Activated naive CD4-positive, alpha-beta T cell treated with anti-CD3 and anti-CD28 coated beads for 36 hours (primary cell): ENCODE measurements at regions of chr6 and their contacts with region 1.

Region 1: DNA sequence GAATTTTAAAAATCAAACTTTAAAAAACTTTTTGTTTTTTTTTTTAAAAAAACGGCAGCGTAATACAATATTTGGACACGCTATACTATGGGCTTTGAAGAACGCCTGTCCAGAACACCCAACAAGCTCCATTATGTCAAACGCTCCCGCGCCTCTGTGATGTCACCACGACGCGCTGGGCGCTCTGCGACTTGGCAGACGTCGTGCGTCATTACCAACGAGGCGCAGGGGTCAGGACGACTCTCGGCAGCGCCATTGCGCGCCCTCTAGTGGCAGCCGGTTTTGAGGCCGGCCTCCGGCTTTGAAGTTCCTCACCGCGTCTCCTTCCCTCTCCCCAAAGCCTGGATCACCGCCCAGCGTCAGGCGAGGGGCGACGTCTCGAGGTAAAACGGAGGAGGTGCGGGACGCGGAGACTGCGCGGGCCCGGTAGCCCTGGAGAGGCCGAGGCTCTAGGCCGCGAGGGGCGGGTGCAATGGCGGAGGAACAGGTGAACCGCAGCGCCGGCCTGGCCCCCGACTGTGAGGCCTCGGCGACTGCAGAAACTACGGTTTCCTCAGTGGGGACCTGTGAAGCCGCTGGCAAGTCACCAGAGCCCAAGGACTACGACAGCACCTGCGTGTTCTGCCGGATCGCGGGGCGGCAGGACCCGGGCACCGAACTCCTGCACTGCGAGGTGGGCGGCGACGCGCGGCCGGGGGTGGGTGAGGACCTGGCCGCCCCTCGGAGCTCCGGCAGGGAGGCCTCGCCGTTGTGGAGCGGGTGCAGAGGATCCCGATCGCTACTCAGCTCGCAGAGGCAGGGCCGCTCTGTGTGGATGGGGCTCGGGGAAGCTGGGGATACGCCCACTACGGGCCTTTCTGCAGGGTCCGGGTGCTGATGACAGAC is at the start of gene HINT3:
- DNase-seq: peak; percentile 99
- H3K4me3 Mint-ChIP-seq: no peak within 1 kb of the TSS
- H3K27ac Mint-ChIP-seq: peak within 1 kb of the TSS; percentile 72
- H3K4me1 Mint-ChIP-seq: peaks cover 9% of the 10 kb centered on the region
- H3K27me3 Mint-ChIP-seq: peaks cover 2% of the 10 kb centered on the region
- total RNA-seq, gene HINT3: 10.6 to 10.9 TPM

Region 2: DNA sequence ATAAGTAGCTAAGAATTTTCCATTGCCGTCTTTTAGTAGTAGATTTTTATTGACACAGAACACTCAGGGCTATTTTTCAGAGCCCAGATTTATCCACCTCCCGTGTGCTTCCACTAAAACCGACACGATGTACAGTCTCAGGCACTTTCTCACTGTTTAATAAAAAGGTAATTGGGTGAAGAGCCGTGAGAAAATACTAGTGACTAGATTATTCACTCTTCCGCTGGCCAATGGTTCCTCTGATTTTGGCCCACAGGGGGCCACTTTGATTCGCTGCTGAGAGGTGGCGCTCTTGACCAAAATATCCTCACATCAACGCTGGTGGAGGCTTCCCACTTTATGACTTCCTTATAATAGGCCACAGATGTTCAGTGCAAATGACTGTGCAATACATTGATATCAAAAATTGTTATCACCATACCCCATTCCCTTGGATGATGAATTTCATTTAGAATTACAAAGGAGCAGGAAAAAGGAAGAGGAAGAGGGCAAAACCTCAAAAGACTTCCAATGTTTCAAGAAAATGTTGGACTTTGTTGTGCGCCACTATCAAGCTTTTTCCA is 642.6 kb before region 1 on chr6:
- CTCF ChIA-PET with region 1: interaction called, 3 read pairs
- intact Hi-C with region 1: loop called (anchors 1 kb)
- DNase-seq: peak; percentile 61
- H3K4me3 Mint-ChIP-seq: no peak overlapping the region
- H3K27ac Mint-ChIP-seq: no peak overlapping the region
- H3K4me1 Mint-ChIP-seq: no peaks in the 10 kb centered on the region
- H3K27me3 Mint-ChIP-seq: peaks cover 2% of the 10 kb centered on the region

Region 3: GRCh38 chr6:125790358-125791150 is 166.2 kb before region 1 on chr6 and contains the start of gene NCOA7:
- CTCF ChIA-PET with region 1: interaction called, 51 read pairs
- intact Hi-C with region 1: loop called (anchors 1 kb)
- DNase-seq: peak; percentile 81
- H3K4me3 Mint-ChIP-seq: peak within 1 kb of the TSS; percentile 90
- H3K27ac Mint-ChIP-seq: peak within 1 kb of the TSS; percentile 96
- H3K4me1 Mint-ChIP-seq: peaks cover 51% of the 10 kb centered on the region
- H3K27me3 Mint-ChIP-seq: no peaks in the 10 kb centered on the region
- total RNA-seq, gene NCOA7: 39.2 to 43.1 TPM

Region 4: DNA sequence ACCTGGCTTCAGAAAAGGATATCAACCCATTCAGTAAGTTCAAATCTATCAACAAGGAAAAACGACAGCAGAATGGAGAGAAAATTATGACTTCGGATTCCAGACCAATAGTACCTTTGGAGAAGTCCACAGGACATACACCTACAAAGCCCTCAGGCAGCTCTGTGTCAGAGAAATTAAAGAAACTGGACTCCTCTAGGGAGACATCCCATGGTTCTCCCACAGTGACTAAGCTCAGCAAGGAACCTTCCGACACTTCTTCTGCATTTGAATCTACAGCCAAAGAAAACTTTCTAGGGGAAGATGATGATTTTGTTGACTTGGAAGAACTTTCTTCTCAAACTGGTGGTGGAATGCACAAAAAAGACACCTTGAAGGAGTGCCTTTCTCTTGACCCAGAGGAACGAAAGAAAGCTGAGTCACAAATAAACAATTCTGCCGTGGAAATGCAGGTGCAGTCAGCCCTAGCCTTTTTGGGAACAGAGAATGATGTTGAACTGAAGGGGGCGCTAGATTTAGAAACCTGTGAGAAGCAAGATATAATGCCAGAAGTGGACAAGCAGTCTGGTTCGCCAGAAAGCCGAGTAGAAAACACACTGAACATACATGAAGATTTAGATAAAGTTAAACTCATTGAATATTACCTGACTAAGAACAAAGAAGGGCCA is 67.6 kb before region 1 on chr6:
- CTCF ChIA-PET with region 1: interaction called, 14 read pairs
- intact Hi-C with region 1: loop called (anchors 1 kb)
- DNase-seq: peak; percentile 37
- H3K4me3 Mint-ChIP-seq: no peak overlapping the region
- H3K27ac Mint-ChIP-seq: no peak overlapping the region
- H3K4me1 Mint-ChIP-seq: no peaks in the 10 kb centered on the region
- H3K27me3 Mint-ChIP-seq: no peaks in the 10 kb centered on the region

Region 5: DNA sequence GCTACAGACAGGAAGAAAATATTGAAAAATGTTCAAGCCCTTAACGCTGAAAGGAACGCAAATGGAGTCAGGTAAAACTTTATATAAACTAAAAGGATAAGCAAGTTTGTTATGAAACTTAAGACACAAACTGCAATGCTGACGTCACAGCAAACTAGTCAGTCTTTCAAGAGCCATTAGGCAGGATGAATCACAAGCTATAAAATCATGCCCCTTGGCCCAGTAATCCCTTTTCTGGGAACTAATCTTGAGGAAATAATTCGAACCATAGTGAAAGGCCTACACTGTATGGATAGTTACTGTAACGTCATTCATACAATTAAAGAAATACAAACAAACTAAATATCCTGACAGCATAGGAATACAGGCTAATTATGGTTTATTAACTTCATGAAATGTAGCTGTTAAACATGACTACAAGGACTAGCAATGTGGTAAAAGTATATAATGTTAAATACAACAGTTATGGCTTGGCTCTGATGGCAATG is 42.8 kb before region 1 on chr6:
- CTCF ChIA-PET with region 1: interaction called, 34 read pairs
- intact Hi-C with region 1: loop called (anchors 1 kb)
- DNase-seq: no peak
- H3K4me3 Mint-ChIP-seq: no peak overlapping the region
- H3K27ac Mint-ChIP-seq: no peak overlapping the region
- H3K4me1 Mint-ChIP-seq: peaks cover 31% of the 10 kb centered on the region
- H3K27me3 Mint-ChIP-seq: no peaks in the 10 kb centered on the region

Region 6: DNA sequence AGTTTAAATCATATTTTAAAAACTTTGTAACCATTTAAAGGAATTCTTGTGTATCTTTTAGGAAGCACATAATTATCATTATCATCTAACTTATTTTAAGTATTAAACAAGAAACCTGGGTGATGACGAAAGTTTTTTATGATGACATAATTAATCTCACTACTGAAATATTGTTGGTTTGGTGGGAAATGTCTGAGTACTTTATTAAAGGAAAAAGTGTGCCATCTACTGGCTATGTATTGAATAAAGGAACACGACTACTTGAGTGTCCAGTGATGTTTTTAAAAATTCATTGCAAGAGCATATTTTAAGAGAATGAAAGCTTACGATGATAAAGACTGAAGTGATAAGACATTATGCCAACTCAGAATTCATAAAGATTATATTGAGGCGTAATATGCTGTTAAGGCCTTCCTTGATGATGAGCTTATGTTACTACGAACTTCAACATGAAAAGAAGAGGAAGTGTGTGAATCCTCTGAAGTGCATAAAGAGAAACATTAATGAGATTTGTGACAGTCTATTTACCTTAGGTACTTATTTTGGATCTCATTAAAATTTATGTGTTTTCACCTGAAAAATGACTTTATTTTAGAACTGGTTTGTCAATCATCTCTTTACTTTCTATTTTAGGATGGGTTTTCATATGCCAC is 17.6 kb after region 1 on chr6:
- CTCF ChIA-PET with region 1: interaction called, 43 read pairs
- intact Hi-C with region 1: loop called (anchors 1 kb)
- DNase-seq: no peak
- H3K4me3 Mint-ChIP-seq: no peak overlapping the region
- H3K27ac Mint-ChIP-seq: no peak overlapping the region
- H3K4me1 Mint-ChIP-seq: peaks cover 7% of the 10 kb centered on the region
- H3K27me3 Mint-ChIP-seq: no peaks in the 10 kb centered on the region

Region 7: GRCh38 chr6:127397729-127398630 is 1441.2 kb after region 1 on chr6:
- CTCF ChIA-PET with region 1: no interaction called
- intact Hi-C with region 1: no loop called
- DNase-seq: no peak
- H3K4me3 Mint-ChIP-seq: no peak overlapping the region
- H3K27ac Mint-ChIP-seq: no peak overlapping the region
- H3K4me1 Mint-ChIP-seq: peaks cover 2% of the 10 kb centered on the region
- H3K27me3 Mint-ChIP-seq: no peaks in the 10 kb centered on the region